Lower leg skin (tissue), 4 donors: ENCODE measurements at regions of chr4 and their contacts with region 1.

Region 1: DNA sequence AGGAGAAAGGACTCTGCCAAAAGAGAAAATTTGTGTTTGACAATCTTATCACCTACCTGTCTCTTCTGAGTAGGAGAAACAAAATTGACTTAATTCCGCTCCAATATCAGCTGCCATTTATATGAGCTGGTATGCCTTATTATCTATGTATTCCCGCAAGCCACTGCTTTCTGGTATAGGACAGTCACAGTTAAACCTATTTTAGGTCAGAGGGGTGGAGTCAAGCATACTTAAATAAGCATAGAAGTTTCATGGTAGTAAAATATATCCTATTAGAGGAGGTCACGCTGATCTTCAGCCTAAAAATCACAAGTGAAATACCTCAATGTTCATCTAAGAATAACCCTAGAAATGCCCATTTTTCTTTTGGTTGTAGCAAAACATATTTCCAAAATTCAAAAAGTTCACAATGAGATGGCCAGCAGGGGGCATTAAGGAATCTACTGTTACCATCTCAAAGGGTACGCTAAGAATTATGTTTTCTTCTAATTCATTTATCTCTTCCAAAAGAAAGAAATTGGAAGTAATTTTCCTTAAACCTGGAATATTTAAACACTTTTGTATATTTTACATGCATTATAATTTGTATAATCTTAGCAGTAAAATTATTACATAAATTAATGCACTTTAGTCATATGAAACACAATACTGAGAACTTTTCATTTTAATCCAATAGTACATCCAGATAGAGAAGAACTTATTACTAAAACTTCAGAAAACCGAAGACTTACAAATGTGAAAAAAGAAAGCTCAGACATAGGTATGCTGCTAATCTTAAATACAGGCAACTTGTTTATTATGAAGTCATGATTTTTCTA is 10.5 kb downstream of the PPAT start:
- DNase-seq: no peak
- H3K4me3 ChIP-seq: no peak overlapping the region
- CTCF ChIP-seq: no peak
- POLR2A ChIP-seq: no peak

Region 2: GRCh38 chr4:56806666-56807065 is 381.8 kb after region 1 on chr4:
- intact Hi-C with region 1: loop called (anchors 5 kb)
- DNase-seq: peak in 1 of 2 donors; percentile 40
- H3K4me3 ChIP-seq: no peak overlapping the region
- CTCF ChIP-seq: no peak
- POLR2A ChIP-seq: no peak